WTC11 (cell line): ENCODE measurements at regions of chr14 and their contacts with region 1.

Region 1: GRCh38 chr14:20613094-20614037 is 22.2 kb upstream of the RNASE12 start:
- DNase-seq: peak; percentile 83
- ATAC-seq: peak; percentile 82
- H3K4me3 Mint-ChIP-seq: no peak overlapping the region
- H3K27ac Mint-ChIP-seq: no peak overlapping the region
- H3K4me1 Mint-ChIP-seq: peaks cover 11% of the 10 kb centered on the region
- H3K27me3 Mint-ChIP-seq: no peaks in the 10 kb centered on the region
- CTCF ChIP-seq: peak; percentile 72

Region 2: GRCh38 chr14:20343092-20343861 is 270.1 kb before region 1 on chr14 and contains the start of gene PARP2:
- CTCF ChIA-PET with region 1: interaction called, 21 read pairs
- POLR2A ChIA-PET with region 1: interaction called, 11 read pairs
- DNase-seq: peak; percentile 99
- ATAC-seq: peak; percentile 97
- H3K4me3 Mint-ChIP-seq: peak within 1 kb of the TSS; percentile 91
- H3K27ac Mint-ChIP-seq: peak within 1 kb of the TSS; percentile 98
- H3K4me1 Mint-ChIP-seq: peaks cover 8% of the 10 kb centered on the region
- H3K27me3 Mint-ChIP-seq: no peaks in the 10 kb centered on the region
- CTCF ChIP-seq: no peak
- total RNA-seq, gene PARP2: 34.5 to 37.1 TPM (median 36.8 TPM) in 3 replicates

Region 3: DNA sequence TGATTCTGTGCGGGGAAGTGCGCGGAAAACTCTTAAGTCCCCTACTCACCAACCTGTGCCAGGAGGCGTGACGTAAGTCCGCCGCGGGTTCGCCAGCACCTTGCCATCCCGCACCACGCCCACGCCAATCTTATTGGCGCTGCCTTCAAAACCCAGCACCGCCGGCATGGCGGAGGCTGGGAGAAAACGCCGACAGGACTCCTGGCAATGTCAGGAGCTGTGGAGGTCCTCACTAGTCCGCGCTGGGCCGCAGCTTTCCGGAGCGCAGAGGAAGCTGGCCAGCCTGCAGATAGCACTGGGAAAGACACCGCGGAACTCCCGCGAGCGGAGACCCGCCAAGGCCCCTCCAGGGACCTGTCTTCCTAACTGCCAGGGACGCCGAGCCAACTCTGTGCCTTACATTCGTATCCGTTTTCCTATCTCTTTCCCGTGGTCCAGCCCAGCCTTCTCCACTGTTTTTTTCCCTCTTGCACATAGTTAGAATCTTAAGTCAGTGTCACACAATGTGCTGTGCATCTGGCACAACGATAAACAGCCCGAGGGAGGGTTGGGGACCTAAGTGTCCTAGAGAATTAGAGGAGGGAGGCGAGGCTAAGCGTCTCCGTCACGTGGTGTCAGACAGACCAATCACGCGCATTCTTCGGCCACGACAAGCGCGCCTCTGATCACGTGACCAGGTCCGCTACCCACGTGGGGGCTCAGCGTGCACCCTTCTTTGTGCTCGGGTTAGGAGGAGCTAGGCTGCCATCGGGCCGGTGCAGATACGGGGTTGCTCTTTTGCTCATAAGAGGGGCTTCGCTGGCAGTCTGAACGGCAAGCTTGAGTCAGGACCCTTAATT is 158.6 kb before region 1 on chr14 and contains the starts of genes APEX1 and OSGEP:
- CTCF ChIA-PET with region 1: interaction called, 10 read pairs
- POLR2A ChIA-PET with region 1: no interaction called
- DNase-seq: peak; percentile 97
- ATAC-seq: peak; percentile 82
- H3K4me3 Mint-ChIP-seq: no peak within 1 kb of the TSS
- H3K27ac Mint-ChIP-seq: no peak within 1 kb of the TSS
- H3K4me1 Mint-ChIP-seq: peaks cover 3% of the 10 kb centered on the region; the same call in 1 of the 2 replicates
- H3K27me3 Mint-ChIP-seq: no peaks in the 10 kb centered on the region
- CTCF ChIP-seq: no peak
- total RNA-seq, gene APEX1: 299 to 324 TPM (median 308 TPM) in 3 replicates
- total RNA-seq, gene OSGEP: 33.3 to 40.0 TPM (median 37.3 TPM) in 3 replicates

Region 4: DNA sequence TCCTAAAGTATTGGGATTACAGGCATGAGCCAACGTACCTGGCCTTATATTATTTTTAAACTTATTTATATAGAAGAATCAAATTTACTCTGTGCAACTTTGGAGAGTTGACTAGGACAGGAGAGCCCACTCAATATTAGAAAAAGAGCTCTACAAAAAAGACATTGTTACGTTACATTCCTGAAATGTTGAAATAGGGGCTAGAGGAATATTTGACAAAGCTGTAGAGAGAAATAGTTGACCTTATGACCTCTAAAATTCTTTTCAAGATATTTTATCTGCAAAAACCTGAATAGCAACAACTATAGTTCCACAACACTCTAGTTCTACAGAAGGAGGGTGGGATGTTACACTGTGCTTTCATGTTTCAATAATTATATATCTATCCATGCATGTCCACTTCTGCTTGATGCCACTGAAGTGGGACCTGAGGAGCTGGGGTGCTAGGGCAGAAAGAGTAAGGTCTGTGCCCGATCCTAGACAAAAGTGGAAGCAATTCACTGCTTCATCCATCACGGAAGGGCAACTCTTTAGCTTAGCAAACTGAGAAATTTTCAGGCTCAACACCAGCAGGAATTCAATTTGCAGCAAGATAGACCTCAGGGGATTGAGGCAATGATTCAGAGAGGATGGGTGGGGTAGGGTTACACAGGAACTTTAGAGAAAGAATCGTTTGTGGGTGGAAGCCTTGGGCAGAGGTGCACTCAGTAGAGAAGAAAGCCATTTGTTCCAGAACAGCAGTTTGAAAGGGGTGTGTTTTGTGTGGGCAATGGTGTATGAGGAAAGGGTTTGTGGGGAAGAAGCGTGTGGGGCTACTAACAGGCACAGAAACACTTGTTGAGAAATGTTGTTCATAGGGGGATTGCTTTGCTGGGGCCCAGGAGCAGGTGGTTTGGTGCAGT is 124.0 kb before region 1 on chr14:
- CTCF ChIA-PET with region 1: interaction called, 64 read pairs
- POLR2A ChIA-PET with region 1: no interaction called
- DNase-seq: no peak
- ATAC-seq: no peak
- H3K4me3 Mint-ChIP-seq: no peak overlapping the region
- H3K27ac Mint-ChIP-seq: no peak overlapping the region; the same call in 1 of the 2 replicates
- H3K4me1 Mint-ChIP-seq: peaks cover 48% of the 10 kb centered on the region
- H3K27me3 Mint-ChIP-seq: no peaks in the 10 kb centered on the region; the same call in 1 of the 2 replicates
- CTCF ChIP-seq: no peak

Region 5: DNA sequence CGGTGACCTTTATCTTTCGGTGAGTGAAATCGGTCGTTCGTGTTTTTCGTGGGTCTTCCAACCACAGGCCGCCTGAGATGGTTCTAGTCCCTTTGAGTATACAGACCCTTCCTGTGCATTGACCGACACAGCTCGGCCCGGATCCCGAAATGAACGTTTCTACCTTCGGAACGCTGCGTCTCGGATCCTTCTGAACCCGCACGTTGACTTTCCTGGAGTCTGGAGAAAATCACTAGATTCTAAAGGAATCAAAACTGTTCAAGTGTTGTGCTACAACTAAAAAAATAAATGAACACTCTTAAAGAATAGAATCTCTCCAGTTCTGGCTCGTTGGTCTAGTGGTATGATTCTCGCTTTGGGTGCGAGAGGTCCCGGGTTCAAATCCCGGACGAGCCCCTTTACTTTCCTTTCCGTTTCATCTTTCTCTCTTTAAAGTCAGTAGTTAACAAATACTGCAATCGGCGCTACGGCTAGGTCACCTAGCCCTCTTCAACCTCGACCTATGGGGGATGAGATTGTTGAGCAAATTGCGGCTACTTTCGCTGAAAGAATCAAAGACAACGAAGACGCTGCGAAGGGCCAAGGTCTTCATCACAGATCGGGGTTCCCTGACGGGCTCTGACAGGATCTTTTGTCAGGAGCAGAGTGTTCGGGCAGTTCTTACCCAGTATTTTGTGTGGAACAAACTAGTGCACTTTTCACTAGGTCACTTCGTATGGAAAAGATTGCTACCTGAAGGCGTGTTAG is 19.5 kb after region 1 on chr14:
- CTCF ChIA-PET with region 1: interaction called, 26 read pairs
- POLR2A ChIA-PET with region 1: no interaction called
- DNase-seq: peak; percentile 78
- ATAC-seq: peak; percentile 60
- H3K4me3 Mint-ChIP-seq: peak overlapping the region; percentile 93
- H3K27ac Mint-ChIP-seq: peak overlapping the region; percentile 78; the same call in 1 of the 2 replicates
- H3K4me1 Mint-ChIP-seq: peaks cover 14% of the 10 kb centered on the region
- H3K27me3 Mint-ChIP-seq: peaks cover 49% of the 10 kb centered on the region
- CTCF ChIP-seq: no peak

Region 6: GRCh38 chr14:20682435-20683124 is 69.2 kb after region 1 on chr14:
- CTCF ChIA-PET with region 1: interaction called, 16 read pairs
- POLR2A ChIA-PET with region 1: interaction called, 3 read pairs
- DNase-seq: peak; percentile 73
- ATAC-seq: peak; percentile 38
- H3K4me3 Mint-ChIP-seq: no peak overlapping the region
- H3K27ac Mint-ChIP-seq: no peak overlapping the region
- H3K4me1 Mint-ChIP-seq: peaks cover 25% of the 10 kb centered on the region
- H3K27me3 Mint-ChIP-seq: peaks cover 10% of the 10 kb centered on the region
- CTCF ChIP-seq: no peak